ENCODE measurements at regions of chr6 and their contacts with region 1.

Region 1: DNA sequence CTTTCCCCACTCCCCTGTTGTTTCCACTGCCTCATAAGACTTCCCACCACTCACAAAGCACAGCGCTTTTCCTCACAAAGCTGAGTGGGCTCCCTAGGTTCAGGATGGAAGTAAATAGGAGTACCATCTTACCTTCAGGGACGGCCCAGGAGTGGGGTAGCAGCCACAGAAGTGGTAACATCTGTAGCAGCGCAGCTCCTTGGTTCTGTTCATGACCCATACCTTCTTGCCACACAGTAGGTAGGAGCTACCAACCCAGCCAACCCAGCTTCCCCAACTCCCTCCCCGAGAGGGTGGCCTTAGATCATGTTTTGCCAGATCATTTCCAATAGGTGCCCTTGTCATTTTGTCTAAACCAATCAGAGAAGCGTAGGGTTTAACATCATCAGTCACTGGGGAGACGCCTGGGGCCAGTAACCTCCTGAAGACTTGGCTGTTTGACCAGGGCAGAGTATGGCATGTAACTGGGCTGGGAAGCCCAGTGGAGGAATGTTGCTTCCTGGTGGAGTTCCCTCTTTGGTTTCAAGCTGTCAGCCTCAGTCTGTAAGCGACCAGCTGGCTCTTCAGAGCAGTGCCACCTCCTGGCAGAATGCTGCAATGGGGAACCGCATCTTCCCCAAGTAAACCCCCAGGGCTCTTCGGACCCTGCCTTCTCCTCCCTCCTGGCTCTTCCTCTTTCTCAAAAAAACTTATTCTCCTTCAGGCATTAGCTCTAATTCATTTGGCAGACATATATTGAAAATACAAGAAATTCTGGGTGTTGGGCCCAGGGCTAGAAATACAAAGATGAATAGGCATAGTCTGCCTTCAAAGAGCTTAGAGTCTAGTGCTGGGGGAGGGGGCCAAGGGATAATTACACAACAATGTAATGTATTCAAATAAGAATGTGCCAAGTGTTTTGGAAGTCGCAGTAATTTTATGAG is at the start of gene HLA-DMA:
- DNase-seq: peak; percentile 65
- ATAC-seq: peak; percentile 91
- H3K4me3 Mint-ChIP-seq: peak within 1 kb of the TSS; percentile 98
- H3K27ac Mint-ChIP-seq: peak within 1 kb of the TSS; percentile 97
- H3K4me1 Mint-ChIP-seq: peaks cover 85% of the 10 kb centered on the region
- H3K27me3 Mint-ChIP-seq: no peaks in the 10 kb centered on the region
- CTCF ChIP-seq: no peak
- total RNA-seq, gene HLA-DMA: 371 and 387 TPM in 2 replicates

Region 2: GRCh38 chr6:32843979-32844838 is 108.9 kb before region 1 on chr6 and contains the start of gene PSMB8:
- CTCF ChIA-PET with region 1: interaction called, 9 read pairs
- POLR2A ChIA-PET with region 1: interaction called, 25 read pairs
- intact Hi-C with region 1: no loop called
- DNase-seq: peak; percentile 96
- ATAC-seq: peak; percentile 78
- H3K4me3 Mint-ChIP-seq: peak within 1 kb of the TSS; percentile 99
- H3K27ac Mint-ChIP-seq: peak within 1 kb of the TSS; percentile 100
- H3K4me1 Mint-ChIP-seq: peaks cover 92% of the 10 kb centered on the region
- H3K27me3 Mint-ChIP-seq: no peaks in the 10 kb centered on the region
- CTCF ChIP-seq: no peak
- total RNA-seq, gene PSMB8: 182 and 194 TPM in 2 replicates

Region 3: GRCh38 chr6:32853541-32854375 is 99.3 kb before region 1 on chr6 and contains the starts of genes PSMB9 and TAP1:
- CTCF ChIA-PET with region 1: interaction called, 5 read pairs
- POLR2A ChIA-PET with region 1: interaction called, 32 read pairs
- intact Hi-C with region 1: no loop called
- DNase-seq: peak; percentile 91
- ATAC-seq: peak; percentile 80
- H3K4me3 Mint-ChIP-seq: peak within 1 kb of the TSS; percentile 99
- H3K27ac Mint-ChIP-seq: peak within 1 kb of the TSS; percentile 98
- H3K4me1 Mint-ChIP-seq: peaks cover 77% of the 10 kb centered on the region
- H3K27me3 Mint-ChIP-seq: no peaks in the 10 kb centered on the region
- CTCF ChIP-seq: peak; percentile 20
- total RNA-seq, gene PSMB9: 198 and 223 TPM in 2 replicates
- total RNA-seq, gene TAP1: 148 and 151 TPM in 2 replicates

Region 4: GRCh38 chr6:32885698-32886286 is 67.3 kb before region 1 on chr6:
- CTCF ChIA-PET with region 1: interaction called, 47 read pairs
- POLR2A ChIA-PET with region 1: interaction called, 14 read pairs
- intact Hi-C with region 1: loop called (anchors 1 kb)
- DNase-seq: no peak
- ATAC-seq: peak; percentile 68
- H3K4me3 Mint-ChIP-seq: no peak overlapping the region
- H3K27ac Mint-ChIP-seq: no peak overlapping the region
- H3K4me1 Mint-ChIP-seq: peaks cover 27% of the 10 kb centered on the region
- H3K27me3 Mint-ChIP-seq: no peaks in the 10 kb centered on the region
- CTCF ChIP-seq: no peak

Region 5: GRCh38 chr6:32933636-32934085 is 19.4 kb before region 1 on chr6:
- CTCF ChIA-PET with region 1: interaction called, 99 read pairs
- POLR2A ChIA-PET with region 1: interaction called, 594 read pairs
- intact Hi-C with region 1: loop called (anchors 1 kb)
- DNase-seq: peak; percentile 60
- ATAC-seq: peak; percentile 54
- H3K4me3 Mint-ChIP-seq: no peak overlapping the region
- H3K27ac Mint-ChIP-seq: peak overlapping the region; percentile 79
- H3K4me1 Mint-ChIP-seq: peaks cover 92% of the 10 kb centered on the region
- H3K27me3 Mint-ChIP-seq: no peaks in the 10 kb centered on the region
- CTCF ChIP-seq: peak; percentile 65

Region 6: DNA sequence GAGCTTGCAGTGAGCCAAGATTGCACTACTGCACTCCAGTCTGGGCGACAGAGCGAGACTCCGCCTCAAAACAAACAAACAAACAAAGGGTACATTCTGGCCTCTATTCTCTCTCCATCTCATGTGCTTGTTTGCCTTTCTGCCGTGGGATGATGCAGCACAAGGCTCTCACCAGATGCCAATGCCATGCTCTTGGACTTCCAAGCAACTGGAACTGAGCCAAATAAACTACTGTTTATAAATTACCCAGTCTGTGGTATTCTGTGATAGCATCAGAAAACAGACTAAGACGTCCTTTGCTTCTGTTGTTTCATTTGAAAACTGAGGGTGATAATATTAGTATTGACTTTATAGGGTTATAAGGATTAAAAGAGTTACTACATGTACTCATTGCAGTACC is 11.7 kb after region 1 on chr6:
- CTCF ChIA-PET with region 1: interaction called, 93 read pairs
- POLR2A ChIA-PET with region 1: interaction called, 1,101 read pairs
- intact Hi-C with region 1: loop called (anchors 1 kb)
- DNase-seq: no peak
- ATAC-seq: no peak
- H3K4me3 Mint-ChIP-seq: no peak overlapping the region
- H3K27ac Mint-ChIP-seq: no peak overlapping the region
- H3K4me1 Mint-ChIP-seq: peaks cover 50% of the 10 kb centered on the region
- H3K27me3 Mint-ChIP-seq: no peaks in the 10 kb centered on the region
- CTCF ChIP-seq: no peak

Measured in activated B cell treated with CpG ODN at 0.5 μM for 24 hours (primary cell).